IMR-90 (cell line): ENCODE measurements at regions of chr2 and their contacts with region 1.

Region 1: GRCh38 chr2:68709421-68709911 is 25.1 kb upstream of the ARHGAP25 start:
- DNase-seq: peak; percentile 67
- ATAC-seq: peak; percentile 90
- H3K4me3 ChIP-seq: no peak overlapping the region
- H3K27ac ChIP-seq: no peak overlapping the region
- H3K4me1 ChIP-seq: peaks cover 4% of the 10 kb centered on the region
- H3K27me3 ChIP-seq: peaks cover 31% of the 10 kb centered on the region
- CTCF ChIP-seq: peak; percentile 72
- POLR2A ChIP-seq: no peak
- RAD21 ChIP-seq: peak; percentile 82

Region 2: DNA sequence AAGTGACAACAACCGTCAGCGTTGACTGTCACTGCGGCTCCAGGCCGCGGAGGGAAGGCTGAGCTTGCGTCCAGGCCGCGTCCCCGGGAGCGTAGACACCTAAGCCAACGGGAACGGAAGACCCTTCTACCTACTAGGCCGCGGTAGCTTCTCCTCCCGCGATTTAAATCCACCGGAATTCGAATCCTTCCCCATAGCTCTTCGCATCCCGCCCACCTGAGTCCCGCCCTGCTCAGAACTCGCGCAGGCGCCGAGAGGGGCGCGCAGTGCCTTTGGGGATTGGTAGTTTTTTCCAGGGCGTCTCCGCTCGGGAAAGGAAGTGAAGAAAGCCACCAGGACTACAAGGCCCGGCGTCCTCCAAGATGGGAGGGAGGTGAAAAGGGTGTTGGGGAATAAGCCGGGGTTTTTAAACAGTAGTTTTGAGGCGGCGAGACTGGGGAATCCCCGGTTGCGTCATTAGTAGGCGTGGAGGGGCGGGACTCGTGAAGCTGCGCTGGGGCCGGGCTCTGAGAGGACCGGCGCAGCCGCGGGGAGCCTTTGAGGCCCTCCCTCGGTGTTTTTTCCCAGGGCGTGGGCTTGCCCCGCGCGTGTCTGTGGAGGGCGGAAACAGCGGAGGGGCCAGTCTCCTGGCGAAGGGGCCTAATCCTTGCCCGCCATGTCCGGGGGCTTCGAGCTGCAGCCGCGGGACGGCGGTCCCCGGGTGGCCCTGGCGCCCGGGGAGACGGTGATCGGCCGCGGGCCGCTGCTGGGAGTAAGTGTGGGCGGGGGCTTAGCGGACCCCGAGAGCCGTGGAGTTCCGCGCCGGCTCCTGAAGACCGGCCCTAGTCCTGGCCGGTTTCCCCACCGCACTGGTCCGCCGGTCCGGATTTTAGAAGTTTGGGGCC is 242.1 kb before region 1 on chr2 and contains the starts of genes APLF and FBXO48:
- CTCF ChIA-PET with region 1: interaction called, 12 read pairs
- POLR2A ChIA-PET with region 1: no interaction called
- dilution Hi-C with region 1: no loop called
- in situ Hi-C with region 1: no loop called
- intact Hi-C with region 1: loop called (anchors 2 kb)
- DNase-seq: peak; percentile 99
- ATAC-seq: peak; percentile 96
- H3K4me3 ChIP-seq: peak within 1 kb of the TSS; percentile 75
- H3K27ac ChIP-seq: peak within 1 kb of the TSS; percentile 63
- H3K4me1 ChIP-seq: peaks cover 3% of the 10 kb centered on the region; the same call in 1 of the 2 replicates
- H3K27me3 ChIP-seq: no peaks in the 10 kb centered on the region
- CTCF ChIP-seq: no peak
- POLR2A ChIP-seq: peak; percentile 91
- RAD21 ChIP-seq: no peak
- total RNA-seq, gene APLF: 2.3 and 3.3 TPM in 2 replicates
- total RNA-seq, gene FBXO48: 0.18 and 0.28 TPM in 2 replicates

Region 3: DNA sequence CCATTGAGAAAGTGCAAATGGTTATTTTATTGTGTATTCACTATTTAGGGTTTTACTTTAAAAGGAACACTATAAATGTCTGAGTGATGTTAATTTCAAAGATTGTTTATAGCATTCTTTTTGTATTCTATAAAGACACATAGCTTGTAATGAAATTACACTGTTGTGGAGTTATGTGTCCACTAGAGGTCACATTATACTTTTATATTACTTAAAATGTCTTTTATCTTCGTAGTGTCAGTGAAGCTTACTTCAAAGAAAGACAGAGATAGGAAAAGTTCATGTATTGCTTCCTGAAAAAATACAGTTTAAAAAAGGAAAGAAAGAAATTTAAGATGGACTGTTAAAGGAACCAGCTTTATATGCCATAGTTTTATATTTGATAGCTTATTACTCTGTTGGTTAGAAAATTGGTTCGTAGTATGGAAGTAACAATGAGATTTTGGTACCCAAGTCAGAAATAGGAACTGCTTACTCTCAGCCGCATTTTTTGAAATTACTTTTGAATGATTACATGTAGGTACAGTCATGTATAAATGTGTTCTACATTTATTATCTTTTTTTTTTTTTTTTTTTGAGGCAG is 221.6 kb before region 1 on chr2:
- CTCF ChIA-PET with region 1: interaction called, 4 read pairs
- POLR2A ChIA-PET with region 1: interaction called, 3 read pairs
- dilution Hi-C with region 1: no loop called
- in situ Hi-C with region 1: no loop called
- intact Hi-C with region 1: loop called (anchors 2 kb)
- DNase-seq: peak; percentile 53
- ATAC-seq: peak; percentile 75; the same call in 1 of the 2 replicates
- H3K4me3 ChIP-seq: no peak overlapping the region
- H3K27ac ChIP-seq: no peak overlapping the region
- H3K4me1 ChIP-seq: 0 out of 2 replicates have a peak, but pooled peaks cover 2% of the 10 kb centered on the region
- H3K27me3 ChIP-seq: no peaks in the 10 kb centered on the region
- CTCF ChIP-seq: peak; percentile 56
- POLR2A ChIP-seq: no peak
- RAD21 ChIP-seq: peak; percentile 51

Region 4: GRCh38 chr2:68751397-68752339 is 42.2 kb after region 1 on chr2:
- CTCF ChIA-PET with region 1: interaction called, 12 read pairs
- POLR2A ChIA-PET with region 1: no interaction called
- dilution Hi-C with region 1: no loop called
- in situ Hi-C with region 1: no loop called
- intact Hi-C with region 1: loop called (anchors 1 kb)
- DNase-seq: peak; percentile 87
- ATAC-seq: peak; percentile 92
- H3K4me3 ChIP-seq: no peak overlapping the region
- H3K27ac ChIP-seq: no peak overlapping the region
- H3K4me1 ChIP-seq: no peaks in the 10 kb centered on the region
- H3K27me3 ChIP-seq: no peaks in the 10 kb centered on the region
- CTCF ChIP-seq: peak; percentile 95
- POLR2A ChIP-seq: no peak
- RAD21 ChIP-seq: peak; percentile 95

Region 5: GRCh38 chr2:68857855-68858456 is 148.5 kb after region 1 on chr2:
- CTCF ChIA-PET with region 1: no interaction called
- POLR2A ChIA-PET with region 1: no interaction called
- dilution Hi-C with region 1: no loop called
- in situ Hi-C with region 1: no loop called
- intact Hi-C with region 1: no loop called
- DNase-seq: peak; percentile 82
- ATAC-seq: peak; percentile 60
- H3K4me3 ChIP-seq: no peak overlapping the region
- H3K27ac ChIP-seq: no peak overlapping the region; the same call in 1 of the 2 replicates
- H3K4me1 ChIP-seq: peaks cover 10% of the 10 kb centered on the region; the same call in 1 of the 2 replicates
- H3K27me3 ChIP-seq: no peaks in the 10 kb centered on the region
- CTCF ChIP-seq: no peak
- POLR2A ChIP-seq: no peak
- RAD21 ChIP-seq: no peak

Region 6: GRCh38 chr2:68909793-68910674 is 200.6 kb after region 1 on chr2:
- CTCF ChIA-PET with region 1: no interaction called
- POLR2A ChIA-PET with region 1: no interaction called
- dilution Hi-C with region 1: no loop called
- in situ Hi-C with region 1: loop called (anchors 5 kb)
- intact Hi-C with region 1: loop called (anchors 2 kb)
- DNase-seq: peak; percentile 82
- ATAC-seq: peak; percentile 83
- H3K4me3 ChIP-seq: no peak overlapping the region
- H3K27ac ChIP-seq: no peak overlapping the region
- H3K4me1 ChIP-seq: peaks cover 10% of the 10 kb centered on the region
- H3K27me3 ChIP-seq: no peaks in the 10 kb centered on the region
- CTCF ChIP-seq: peak; percentile 90
- POLR2A ChIP-seq: no peak
- RAD21 ChIP-seq: peak; percentile 95

Region 7: GRCh38 chr2:68918497-68918896 is 209.0 kb after region 1 on chr2:
- CTCF ChIA-PET with region 1: interaction called, 3 read pairs
- POLR2A ChIA-PET with region 1: no interaction called
- dilution Hi-C with region 1: no loop called
- in situ Hi-C with region 1: loop called (anchors 5 kb)
- intact Hi-C with region 1: no loop called
- DNase-seq: no peak
- ATAC-seq: no peak
- H3K4me3 ChIP-seq: no peak overlapping the region
- H3K27ac ChIP-seq: no peak overlapping the region
- H3K4me1 ChIP-seq: peaks cover 3% of the 10 kb centered on the region; the same call in 1 of the 2 replicates
- H3K27me3 ChIP-seq: no peaks in the 10 kb centered on the region
- CTCF ChIP-seq: no peak
- POLR2A ChIP-seq: no peak
- RAD21 ChIP-seq: no peak

Region 8: GRCh38 chr2:68925295-68925896 is 215.9 kb after region 1 on chr2:
- CTCF ChIA-PET with region 1: interaction called, 24 read pairs
- POLR2A ChIA-PET with region 1: no interaction called
- dilution Hi-C with region 1: no loop called
- in situ Hi-C with region 1: no loop called
- intact Hi-C with region 1: loop called (anchors 1 kb)
- DNase-seq: peak; percentile 64
- ATAC-seq: peak; percentile 67; the same call in 1 of the 2 replicates
- H3K4me3 ChIP-seq: no peak overlapping the region
- H3K27ac ChIP-seq: no peak overlapping the region
- H3K4me1 ChIP-seq: peaks cover 3% of the 10 kb centered on the region
- H3K27me3 ChIP-seq: no peaks in the 10 kb centered on the region; the same call in 1 of the 2 replicates
- CTCF ChIP-seq: peak; percentile 96
- POLR2A ChIP-seq: peak; percentile 20; the same call in 1 of the 2 replicates
- RAD21 ChIP-seq: peak; percentile 96